GM10248 (cell line): ENCODE measurements at regions of chr7 and their contacts with region 1.

Region 1: GRCh38 chr7:2360796-2361195 is 6.2 kb downstream of the EIF3B start:
- DNase-seq: no peak
- CTCF ChIP-seq: no peak

Region 2: GRCh38 chr7:2138146-2138765 is 222.5 kb before region 1 on chr7:
- CTCF ChIA-PET with region 1: no interaction called
- POLR2A ChIA-PET with region 1: no interaction called
- DNase-seq: peak; percentile 86
- CTCF ChIP-seq: no peak

Region 3: DNA sequence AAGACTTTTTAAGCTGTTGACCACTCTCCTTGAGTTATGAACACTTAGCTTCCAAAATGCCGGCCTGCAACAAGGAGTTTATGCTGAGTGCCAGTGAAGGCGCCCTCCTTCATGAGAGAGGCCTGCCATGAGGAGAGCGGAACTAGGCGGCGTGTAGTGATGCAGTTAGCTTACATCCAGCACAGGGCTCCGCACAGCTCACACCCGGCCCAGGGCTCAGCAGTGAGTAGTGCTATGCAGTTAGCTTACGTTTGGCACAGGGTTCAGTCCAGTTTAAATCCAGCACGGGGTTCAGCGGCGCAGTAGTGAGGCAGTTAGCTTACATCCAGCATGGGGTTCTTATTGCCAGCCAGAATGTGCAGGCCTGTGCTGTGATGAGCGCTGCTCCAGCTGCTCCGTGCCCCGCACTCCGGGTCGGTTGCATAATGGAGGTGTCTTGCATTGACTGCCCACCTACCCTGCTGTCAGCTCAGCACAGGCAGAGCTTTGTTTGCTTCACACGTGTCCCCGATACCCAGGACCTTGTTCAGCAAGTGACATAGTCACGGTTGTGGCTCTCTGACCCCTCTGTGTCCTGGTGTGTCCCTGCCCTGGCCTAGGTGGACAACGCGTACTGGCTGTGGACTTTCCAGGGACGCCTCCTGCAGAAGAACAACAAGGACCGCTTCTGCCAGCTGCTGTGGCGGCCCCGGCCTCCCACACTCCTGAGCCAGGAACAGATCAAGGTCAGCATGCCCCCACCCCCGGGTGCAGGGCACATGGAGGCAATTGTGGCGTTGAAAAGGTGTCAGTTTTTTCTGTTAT is 15.8 kb after region 1 on chr7:
- CTCF ChIA-PET with region 1: interaction called, 8 read pairs
- POLR2A ChIA-PET with region 1: interaction called, 13 read pairs
- DNase-seq: no peak
- CTCF ChIP-seq: no peak

Region 4: DNA sequence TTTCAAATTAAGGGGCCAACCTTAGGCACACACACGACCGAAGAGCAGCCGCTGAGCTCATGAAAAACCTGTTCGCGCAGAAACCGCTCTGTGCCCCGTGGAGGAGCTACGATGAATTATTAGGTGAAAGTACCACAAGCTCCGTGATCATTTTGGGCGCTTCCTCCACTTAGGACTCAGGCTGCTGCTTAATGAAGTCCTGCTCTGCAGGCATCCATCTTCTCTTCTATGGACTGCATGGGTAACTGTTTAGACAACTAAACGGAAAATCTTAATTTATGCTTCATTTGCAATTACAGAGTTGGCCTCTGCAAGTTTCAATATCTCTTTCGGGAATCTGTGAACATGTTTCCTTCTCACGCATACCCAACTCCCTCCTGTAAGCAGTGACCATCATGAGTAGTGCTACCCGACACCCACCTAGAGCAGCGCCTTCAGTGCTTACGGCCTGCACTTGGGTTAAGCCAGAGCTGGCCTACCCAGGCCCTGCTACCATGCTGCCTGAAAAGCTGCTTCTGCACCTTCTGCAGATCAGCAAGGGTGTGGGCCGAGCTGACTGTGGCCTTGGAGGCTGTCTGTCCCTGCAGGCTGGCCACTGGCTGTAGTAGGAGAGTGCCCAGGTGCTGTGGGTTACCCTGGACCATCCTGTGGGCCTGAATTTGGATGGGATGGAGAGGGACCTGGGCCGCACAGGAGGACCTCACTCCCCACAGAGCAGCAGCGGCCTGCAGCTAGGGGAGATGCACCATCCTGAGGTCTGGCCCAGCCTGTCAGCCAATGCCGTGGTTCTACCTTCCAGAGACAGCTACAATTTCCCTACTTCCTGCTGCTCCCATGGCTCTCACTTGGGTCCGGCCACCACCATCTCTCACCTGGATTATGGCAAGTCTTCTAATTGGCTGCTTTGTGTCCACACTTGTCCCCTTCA is 447.3 kb after region 1 on chr7:
- CTCF ChIA-PET with region 1: no interaction called
- POLR2A ChIA-PET with region 1: no interaction called
- DNase-seq: peak; percentile 62
- CTCF ChIP-seq: no peak